ENCODE measurements at regions of chr10 and their contacts with region 1.

Region 1: DNA sequence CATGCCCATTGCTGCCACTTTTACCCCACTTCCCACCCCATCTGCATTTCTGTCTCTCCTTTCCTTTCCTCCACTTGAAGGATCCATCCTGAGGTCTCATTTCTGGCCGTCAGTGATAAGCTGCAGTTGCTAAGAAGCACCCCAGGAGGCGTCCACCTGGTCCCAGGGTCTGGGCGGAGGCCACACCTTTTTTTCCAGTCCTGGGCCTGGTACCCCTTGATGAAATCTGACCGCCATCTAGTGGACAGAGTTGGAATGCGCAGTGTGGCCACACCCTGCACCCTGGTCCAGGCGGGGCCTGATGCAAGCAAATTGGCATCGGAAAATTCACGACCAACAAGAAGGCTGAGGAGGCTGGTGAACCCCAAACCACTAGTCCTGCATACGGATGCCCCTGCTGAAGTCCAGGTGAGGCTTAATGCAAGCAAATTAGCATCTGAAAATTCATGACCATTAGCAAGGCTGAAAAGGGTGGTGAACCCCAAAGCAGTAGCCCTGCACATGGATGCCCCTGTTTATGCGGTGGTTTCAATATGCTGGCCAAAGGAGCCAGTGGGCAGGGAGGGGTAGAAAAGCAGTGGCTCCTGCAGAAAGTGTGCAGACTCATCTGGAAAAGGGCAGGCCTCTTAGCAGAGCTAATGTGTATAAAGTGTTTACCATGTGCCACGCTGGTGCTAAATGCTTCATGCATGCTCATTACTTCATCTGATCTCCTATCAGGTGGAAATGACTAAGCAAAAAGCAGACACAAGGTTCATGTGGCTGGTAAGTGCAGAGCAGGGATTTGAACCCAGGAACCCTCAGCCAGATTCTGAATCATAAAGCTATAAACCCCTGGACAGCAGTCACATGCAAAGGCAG is 43.2 kb downstream of the GPAM start:
- DNase-seq: peak; percentile 86 to 89
- H3K4me3 ChIP-seq: no peak overlapping the region
- H3K4me3 Mint-ChIP-seq: no peak overlapping the region
- H3K27ac Mint-ChIP-seq: no peak overlapping the region
- H3K4me1 ChIP-seq: no peaks in the 10 kb centered on the region
- H3K4me1 Mint-ChIP-seq: no peaks in the 10 kb centered on the region
- H3K27me3 ChIP-seq: no peaks in the 10 kb centered on the region
- H3K27me3 Mint-ChIP-seq: no peaks in the 10 kb centered on the region
- CTCF ChIP-seq: peak; percentile 88 to 91

Region 2: GRCh38 chr10:111756217-111757061 is 383.9 kb before region 1 on chr10:
- CTCF ChIA-PET with region 1: interaction called, 8 read pairs
- POLR2A ChIA-PET with region 1: no interaction called
- intact Hi-C with region 1: loop called (anchors 1 kb)
- DNase-seq: peak; percentile 68 to 69
- H3K4me3 ChIP-seq: no peak overlapping the region
- H3K4me3 Mint-ChIP-seq: peak overlapping the region; percentile 55
- H3K27ac Mint-ChIP-seq: no peak overlapping the region
- H3K4me1 ChIP-seq: no peaks in the 10 kb centered on the region
- H3K4me1 Mint-ChIP-seq: no peaks in the 10 kb centered on the region
- H3K27me3 ChIP-seq: no peaks in the 10 kb centered on the region
- H3K27me3 Mint-ChIP-seq: peaks cover 7% of the 10 kb centered on the region
- CTCF ChIP-seq: peak; percentile 57 to 78

Region 3: DNA sequence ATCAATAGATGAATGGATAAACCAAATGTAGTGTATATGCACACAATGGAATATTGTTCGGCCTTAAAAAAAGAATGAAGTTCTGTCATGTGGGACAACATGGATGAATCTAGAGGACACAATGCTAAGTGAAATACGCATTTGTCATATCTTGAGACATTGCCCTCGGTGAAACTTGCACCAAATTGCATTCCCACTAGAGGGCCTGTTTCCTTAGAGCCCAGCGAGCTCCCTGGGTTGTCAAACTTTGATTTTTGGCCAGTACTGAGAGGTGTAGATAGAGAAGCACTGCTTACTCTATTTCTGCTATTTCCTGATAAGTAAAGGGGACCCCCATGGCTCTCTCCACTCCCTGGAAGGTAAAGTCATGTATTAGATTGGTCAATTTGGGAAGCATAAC is 113.9 kb before region 1 on chr10:
- CTCF ChIA-PET with region 1: interaction called, 8 read pairs
- POLR2A ChIA-PET with region 1: no interaction called
- intact Hi-C with region 1: loop called (anchors 1 kb)
- DNase-seq: peak in 1 of 2 experiments; percentile 11
- H3K4me3 ChIP-seq: no peak overlapping the region
- H3K4me3 Mint-ChIP-seq: no peak overlapping the region
- H3K27ac Mint-ChIP-seq: no peak overlapping the region
- H3K4me1 ChIP-seq: no peaks in the 10 kb centered on the region
- H3K4me1 Mint-ChIP-seq: no peaks in the 10 kb centered on the region
- H3K27me3 ChIP-seq: no peaks in the 10 kb centered on the region
- H3K27me3 Mint-ChIP-seq: peaks cover 3% of the 10 kb centered on the region
- CTCF ChIP-seq: peak in 1 of 2 experiments; percentile 46

Region 4: DNA sequence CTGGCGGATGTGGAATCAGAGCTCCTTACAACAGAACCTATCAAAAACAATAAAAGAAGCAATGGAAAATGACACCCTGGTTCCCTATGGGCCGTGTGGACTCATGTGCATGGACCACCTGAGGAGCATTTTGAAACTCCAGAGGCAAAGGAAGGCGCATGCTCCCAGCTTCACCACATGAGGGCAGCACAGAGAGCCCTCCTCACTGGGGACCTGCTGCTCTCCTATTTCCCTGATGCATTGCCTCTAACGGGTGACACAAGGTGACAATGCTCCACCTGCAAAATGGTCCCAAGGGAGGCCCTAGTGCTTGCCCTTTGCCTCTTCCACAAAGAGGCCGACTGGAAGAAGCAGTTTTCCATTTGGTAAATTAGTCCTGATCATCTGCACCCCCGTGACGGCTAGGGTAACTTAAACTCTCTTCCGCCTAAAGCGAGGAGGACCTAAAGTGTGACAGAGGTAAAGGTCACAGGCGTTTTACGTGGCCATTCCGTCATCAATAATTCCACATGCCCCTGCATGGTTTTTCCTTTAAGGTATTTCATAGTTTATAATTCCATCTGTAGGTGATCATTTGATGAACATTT is 24.4 kb before region 1 on chr10:
- CTCF ChIA-PET with region 1: interaction called, 24 read pairs
- POLR2A ChIA-PET with region 1: no interaction called
- intact Hi-C with region 1: loop called (anchors 1 kb)
- DNase-seq: peak; percentile 62 to 73
- H3K4me3 ChIP-seq: no peak overlapping the region
- H3K4me3 Mint-ChIP-seq: no peak overlapping the region
- H3K27ac Mint-ChIP-seq: no peak overlapping the region
- H3K4me1 ChIP-seq: no peaks in the 10 kb centered on the region
- H3K4me1 Mint-ChIP-seq: no peaks in the 10 kb centered on the region
- H3K27me3 ChIP-seq: no peaks in the 10 kb centered on the region
- H3K27me3 Mint-ChIP-seq: peaks cover 10% of the 10 kb centered on the region
- CTCF ChIP-seq: peak; percentile 88 to 91

Region 5: GRCh38 chr10:112126901-112127300 is 13.4 kb before region 1 on chr10:
- CTCF ChIA-PET with region 1: interaction called, 11 read pairs
- POLR2A ChIA-PET with region 1: no interaction called
- intact Hi-C with region 1: no loop called
- DNase-seq: no peak
- H3K4me3 ChIP-seq: no peak overlapping the region
- H3K4me3 Mint-ChIP-seq: no peak overlapping the region
- H3K27ac Mint-ChIP-seq: no peak overlapping the region
- H3K4me1 ChIP-seq: peaks cover 8% of the 10 kb centered on the region; the same call in 1 of the 2 replicates
- H3K4me1 Mint-ChIP-seq: no peaks in the 10 kb centered on the region
- H3K27me3 ChIP-seq: no peaks in the 10 kb centered on the region
- H3K27me3 Mint-ChIP-seq: peaks cover 3% of the 10 kb centered on the region
- CTCF ChIP-seq: no peak